BJ (cell line): ENCODE measurements at regions of chr13 and their contacts with region 1.

Region 1: DNA sequence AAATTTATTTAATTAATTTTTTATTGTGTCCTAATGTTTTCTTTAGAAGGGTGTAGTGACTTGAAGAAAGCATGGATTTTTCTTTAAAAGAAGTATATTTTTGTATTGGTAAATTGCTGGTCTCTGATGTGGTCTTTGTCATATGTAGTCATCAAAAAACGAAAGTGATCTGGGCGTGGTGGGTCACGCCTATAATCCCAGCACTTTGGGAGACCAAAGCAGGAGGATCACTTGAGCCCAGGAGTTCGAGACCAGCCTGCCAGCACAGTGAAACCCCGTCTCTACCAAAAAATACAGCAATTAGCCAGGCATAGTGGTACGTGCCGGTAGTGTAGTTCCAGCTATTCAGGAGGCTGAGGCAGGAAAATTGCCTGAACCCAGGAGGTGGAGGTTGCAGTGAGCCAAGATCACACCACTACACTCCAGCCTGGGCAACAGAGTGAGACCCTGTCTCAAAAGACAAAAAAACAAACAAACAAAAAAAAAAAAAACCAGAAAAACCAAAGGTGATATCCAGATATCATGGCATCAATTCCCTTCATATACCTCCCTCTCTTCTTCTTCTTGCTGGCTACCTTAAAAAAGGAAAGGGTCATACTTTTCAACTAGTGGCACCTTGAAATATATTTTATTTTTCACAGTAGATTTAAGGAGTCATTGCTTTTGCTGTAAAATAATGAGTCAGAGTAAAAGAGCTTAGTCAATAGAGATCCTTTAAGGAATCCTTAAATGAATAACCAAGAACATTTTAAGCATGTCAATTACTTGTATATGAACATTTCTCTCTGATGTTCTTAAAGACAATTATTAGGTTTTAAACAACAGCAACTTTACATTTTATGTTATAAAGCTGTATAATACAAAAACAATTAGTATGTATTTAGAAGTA is 19.9 kb downstream of the KCTD4 start:
- DNase-seq: no peak
- H3K4me3 ChIP-seq: no peak overlapping the region
- H3K27me3 ChIP-seq: no peaks in the 10 kb centered on the region
- CTCF ChIP-seq: no peak

Region 2: GRCh38 chr13:44819245-44819644 is 361.7 kb before region 1 on chr13:
- CTCF ChIA-PET with region 1: no interaction called
- POLR2A ChIA-PET with region 1: interaction called, 25 read pairs
- DNase-seq: no peak
- H3K4me3 ChIP-seq: no peak overlapping the region
- H3K27me3 ChIP-seq: no peaks in the 10 kb centered on the region
- CTCF ChIP-seq: no peak